Esophagus squamous epithelium (tissue), 5 donors: ENCODE measurements at regions of chr5 and their contacts with region 1.

Region 1: DNA sequence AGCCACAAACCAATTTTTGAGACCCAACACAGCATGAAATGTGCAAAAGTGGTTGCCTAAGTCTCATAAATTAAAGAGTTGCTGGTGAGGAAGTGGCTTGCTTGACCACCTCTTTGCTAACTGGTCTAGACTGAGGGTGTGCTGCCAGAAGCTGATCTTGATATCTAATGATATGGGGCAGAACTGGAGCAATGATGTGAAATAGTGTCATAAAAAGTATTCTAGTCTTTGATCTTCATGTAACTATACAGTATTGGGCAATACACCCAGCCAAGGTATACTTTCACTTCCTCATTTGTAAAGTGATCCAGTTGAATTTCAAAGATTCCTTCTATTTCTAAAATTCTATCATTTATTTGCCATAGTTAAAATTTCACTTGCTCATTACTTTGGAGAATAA is 5.9 kb upstream of the YTHDC2 start:
- DNase-seq: no peak
- H3K4me3 ChIP-seq: no peak overlapping the region
- H3K27ac ChIP-seq: no peak overlapping the region
- H3K4me1 ChIP-seq: peaks cover 0 to 17% (median 0%) of the 10 kb centered on the region in 3 donors
- H3K27me3 ChIP-seq: peaks cover 0 to 15% (median 0%) of the 10 kb centered on the region in 4 donors
- CTCF ChIP-seq: no peak
- POLR2A ChIP-seq: no peak

Region 2: DNA sequence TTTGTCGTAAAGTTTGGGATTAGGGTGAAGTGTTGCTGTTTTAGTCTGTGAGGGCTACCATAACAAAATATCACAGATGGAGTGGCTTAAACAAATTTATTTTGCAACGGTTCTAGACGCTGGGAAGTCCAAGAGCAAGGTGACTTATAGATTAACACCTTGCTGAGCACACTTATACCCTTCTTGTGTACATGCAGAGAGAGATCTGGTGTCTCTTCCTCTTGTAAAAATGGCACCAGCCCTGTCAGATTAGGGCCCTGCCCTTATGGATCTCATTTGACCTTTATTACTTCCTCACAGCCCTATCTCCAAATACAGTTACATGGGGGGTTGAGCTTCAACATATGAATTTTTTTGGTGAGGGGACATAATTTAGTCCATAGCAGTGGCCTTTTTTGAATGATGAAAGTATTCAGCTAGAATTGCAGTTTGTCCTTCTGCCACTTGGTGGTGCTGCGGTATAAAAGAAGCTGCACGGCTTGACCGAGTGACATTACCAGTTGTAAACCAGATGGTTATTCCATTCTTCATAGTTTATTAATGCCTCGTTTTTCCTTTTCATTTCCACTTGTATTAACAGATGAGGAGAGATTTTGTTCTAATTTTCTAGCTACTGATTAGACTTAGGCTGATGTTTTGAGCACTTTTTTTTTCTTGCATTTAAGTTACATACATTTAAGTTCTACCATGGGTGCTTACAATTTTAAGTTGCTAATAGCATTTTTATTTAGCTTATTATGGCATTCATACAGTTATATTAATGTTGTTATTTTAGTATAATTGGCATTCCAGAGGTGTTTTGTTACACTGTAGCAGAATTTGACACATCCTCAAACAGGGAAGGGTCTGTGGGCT is 511.6 kb before region 1 on chr5:
- intact Hi-C with region 1: loop called (anchors 10 kb)
- DNase-seq: no peak
- H3K4me3 ChIP-seq: no peak overlapping the region
- H3K27ac ChIP-seq: no peak overlapping the region
- H3K4me1 ChIP-seq: peaks cover 0 to 11% (median 0%) of the 10 kb centered on the region in 3 donors
- H3K27me3 ChIP-seq: no peaks in the 10 kb centered on the region
- CTCF ChIP-seq: peak; percentile 71 to 92 (median 88)
- POLR2A ChIP-seq: no peak